ENCODE measurements at regions of chr1 and their contacts with region 1.

Region 1: GRCh38 chr1:232876506-232877364 is 71.5 kb downstream of the MAP10 start:
- DNase-seq: no peak
- H3K4me3 Mint-ChIP-seq: no peak overlapping the region
- H3K27ac Mint-ChIP-seq: peak overlapping the region; percentile 49
- H3K4me1 Mint-ChIP-seq: peaks cover 17% of the 10 kb centered on the region
- H3K27me3 Mint-ChIP-seq: no peaks in the 10 kb centered on the region

Region 2: GRCh38 chr1:232891071-232891470 is 14.3 kb after region 1 on chr1:
- intact Hi-C with region 1: loop called (anchors 1 kb)
- DNase-seq: no peak
- H3K4me3 Mint-ChIP-seq: no peak overlapping the region
- H3K27ac Mint-ChIP-seq: no peak overlapping the region
- H3K4me1 Mint-ChIP-seq: peaks cover 8% of the 10 kb centered on the region
- H3K27me3 Mint-ChIP-seq: peaks cover 3% of the 10 kb centered on the region

Region 3: GRCh38 chr1:232904566-232904965 is 27.8 kb after region 1 on chr1:
- intact Hi-C with region 1: no loop called
- DNase-seq: peak; percentile 20
- H3K4me3 Mint-ChIP-seq: no peak overlapping the region
- H3K27ac Mint-ChIP-seq: peak overlapping the region; percentile 5
- H3K4me1 Mint-ChIP-seq: peaks cover 52% of the 10 kb centered on the region
- H3K27me3 Mint-ChIP-seq: no peaks in the 10 kb centered on the region

Region 4: DNA sequence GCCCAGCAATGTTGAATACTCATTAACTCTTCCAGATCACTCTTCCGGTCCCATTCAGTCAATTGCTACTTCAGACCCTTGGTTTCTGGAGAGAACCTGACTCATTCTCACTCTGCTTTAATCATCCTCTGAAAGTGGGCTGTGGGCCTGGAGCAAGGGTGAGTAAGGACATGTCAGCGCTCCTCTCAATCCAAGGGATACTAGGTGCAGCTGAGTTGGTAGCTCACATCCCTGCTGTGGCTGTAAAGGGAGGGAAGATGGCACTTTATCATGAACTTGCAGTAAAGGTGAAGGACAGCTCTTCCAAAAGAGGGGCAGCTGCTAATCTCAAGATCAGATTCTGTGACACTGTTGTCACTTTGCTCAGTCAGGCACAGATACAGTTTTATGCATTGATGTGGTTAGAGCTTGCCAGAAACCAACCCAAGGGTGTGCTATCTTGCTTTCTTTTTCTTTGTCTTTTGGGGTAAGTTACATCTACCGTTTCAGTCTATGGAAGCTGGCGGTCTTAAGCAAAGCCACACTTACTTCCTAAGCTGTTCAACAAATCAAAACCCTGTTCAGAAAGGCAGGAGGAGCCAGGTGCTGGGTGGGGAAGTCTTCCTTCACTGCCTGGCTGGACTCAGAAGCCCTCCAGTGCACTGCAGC is 47.1 kb after region 1 on chr1:
- intact Hi-C with region 1: loop called (anchors 1 kb)
- DNase-seq: peak; percentile 59
- H3K4me3 Mint-ChIP-seq: peak overlapping the region; percentile 46
- H3K27ac Mint-ChIP-seq: peak overlapping the region; percentile 93
- H3K4me1 Mint-ChIP-seq: peaks cover 37% of the 10 kb centered on the region
- H3K27me3 Mint-ChIP-seq: no peaks in the 10 kb centered on the region

Region 5: GRCh38 chr1:233113009-233113879 is 236.5 kb after region 1 on chr1:
- intact Hi-C with region 1: no loop called
- DNase-seq: peak; percentile 52
- H3K4me3 Mint-ChIP-seq: peak overlapping the region; percentile 52
- H3K27ac Mint-ChIP-seq: peak overlapping the region; percentile 89
- H3K4me1 Mint-ChIP-seq: peaks cover 55% of the 10 kb centered on the region
- H3K27me3 Mint-ChIP-seq: no peaks in the 10 kb centered on the region

Region 6: GRCh38 chr1:233166896-233167295 is 290.2 kb after region 1 on chr1:
- intact Hi-C with region 1: no loop called
- DNase-seq: no peak
- H3K4me3 Mint-ChIP-seq: no peak overlapping the region
- H3K27ac Mint-ChIP-seq: no peak overlapping the region
- H3K4me1 Mint-ChIP-seq: no peaks in the 10 kb centered on the region
- H3K27me3 Mint-ChIP-seq: no peaks in the 10 kb centered on the region